HEK293T (cell line): ENCODE measurements at regions of chr1 and their contacts with region 1.

Region 1: GRCh38 chr1:91924146-91924545 is 25.1 kb upstream of the BRDT start:
- DNase-seq: no peak

Region 2: DNA sequence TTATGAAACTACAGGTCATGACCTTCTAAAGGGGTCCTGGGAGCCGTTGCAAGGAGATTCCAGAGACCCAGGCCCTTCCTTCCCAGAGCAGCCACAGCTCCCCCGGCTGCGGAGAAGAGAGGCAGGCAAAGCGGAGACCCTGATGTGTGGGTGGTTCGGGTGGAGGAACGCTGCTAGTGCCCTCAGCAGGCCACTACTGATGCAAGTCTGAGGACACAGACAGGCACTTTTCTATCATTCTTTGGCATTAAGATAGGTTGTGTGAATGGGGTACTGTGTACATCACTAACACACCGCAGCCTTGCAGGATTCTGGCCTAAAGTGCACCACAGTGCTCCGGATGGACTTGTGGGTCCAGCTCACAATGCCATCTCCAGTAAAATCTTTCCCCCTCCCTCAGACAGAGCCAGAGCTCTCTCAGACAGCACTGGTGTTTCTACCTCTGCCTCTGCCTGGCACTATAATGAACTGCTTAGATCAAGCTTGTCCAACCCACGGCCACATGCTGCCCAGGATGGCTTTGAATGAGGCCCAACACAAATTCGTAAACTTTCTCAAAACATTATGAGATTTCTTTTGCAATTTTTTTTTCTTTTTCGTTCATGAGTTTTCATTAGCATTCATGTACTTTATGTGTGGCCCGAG is 159.6 kb before region 1 on chr1:
- CTCF ChIA-PET with region 1: interaction called, 11 read pairs
- POLR2A ChIA-PET with region 1: no interaction called
- DNase-seq: peak; percentile 34

Region 3: DNA sequence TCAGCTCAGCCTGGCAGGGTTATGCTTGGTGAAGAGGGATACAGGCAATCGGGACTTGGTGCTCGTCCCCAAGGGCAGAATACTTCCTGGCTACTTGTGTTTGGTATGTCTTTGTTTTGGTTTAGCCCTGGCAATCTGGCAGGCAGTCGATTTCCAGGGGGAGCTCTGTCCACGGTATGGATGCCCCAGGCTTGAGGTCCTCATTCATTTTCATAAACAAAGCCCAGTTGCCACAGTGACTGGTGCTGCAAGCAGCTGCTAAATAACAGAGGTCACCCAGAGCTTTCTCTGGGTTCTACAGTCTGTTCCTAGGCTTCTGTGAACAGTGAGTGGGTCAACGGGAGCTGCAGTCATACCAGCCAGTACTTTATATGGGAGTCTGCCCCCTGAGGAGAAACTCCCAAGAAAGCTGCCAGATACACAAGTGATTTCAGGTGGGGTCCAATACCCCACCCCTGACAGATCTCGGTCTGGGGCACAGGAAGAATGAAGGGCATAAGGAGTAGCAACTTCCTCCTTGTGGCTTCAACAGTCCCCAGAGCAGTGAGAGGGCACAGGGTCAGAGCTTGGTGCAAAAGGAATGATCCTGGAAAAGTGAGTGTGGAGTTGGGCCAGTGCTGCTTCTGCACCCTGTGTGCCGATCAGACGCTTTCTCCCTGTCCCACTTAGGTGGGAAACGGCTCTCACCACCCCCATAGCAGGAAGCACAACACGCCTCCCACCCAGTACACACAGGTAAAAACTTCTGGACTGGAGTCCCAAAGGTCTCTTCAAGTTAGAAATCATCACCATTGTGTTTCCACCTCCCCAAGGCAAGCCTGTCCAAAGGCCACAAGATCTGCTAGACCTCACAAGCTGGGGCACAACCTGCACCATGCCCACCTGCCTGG is 93.7 kb before region 1 on chr1:
- CTCF ChIA-PET with region 1: no interaction called
- POLR2A ChIA-PET with region 1: no interaction called
- DNase-seq: no peak

Region 4: DNA sequence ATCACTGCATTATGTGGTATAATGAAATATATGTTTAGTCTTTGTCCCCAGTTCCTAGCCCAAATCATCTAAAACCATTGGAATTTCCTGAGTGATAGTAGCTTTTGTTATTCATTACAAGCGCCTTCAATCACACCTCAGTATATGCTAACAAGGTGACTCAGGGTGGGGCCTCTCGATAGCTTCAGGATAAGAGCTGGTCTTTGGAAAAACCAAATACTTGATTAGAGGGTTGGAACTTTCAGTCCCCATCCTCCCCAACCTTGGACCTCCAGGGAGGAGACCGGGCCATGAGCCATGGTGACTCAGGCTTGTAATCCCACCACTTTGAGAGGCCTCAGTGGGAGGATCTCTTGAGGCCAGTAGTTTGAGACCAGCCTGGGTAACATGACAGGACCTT is 19.9 kb after region 1 on chr1:
- CTCF ChIA-PET with region 1: interaction called, 11 read pairs
- POLR2A ChIA-PET with region 1: no interaction called
- DNase-seq: no peak

Region 5: GRCh38 chr1:92118826-92119225 is 194.7 kb after region 1 on chr1:
- CTCF ChIA-PET with region 1: no interaction called
- POLR2A ChIA-PET with region 1: no interaction called
- DNase-seq: no peak